Panc1 (cell line): ENCODE measurements at regions of chr2 and their contacts with region 1.

Region 1: GRCh38 chr2:100730346-100730745 is 89.6 kb upstream of the NPAS2 start:
- DNase-seq: no peak
- ATAC-seq: peak; percentile 92
- H3K4me3 ChIP-seq: no peak overlapping the region
- H3K27ac ChIP-seq: no peak overlapping the region
- H3K4me1 ChIP-seq: peaks cover 10% of the 10 kb centered on the region
- H3K27me3 ChIP-seq: no peaks in the 10 kb centered on the region
- CTCF ChIP-seq: peak; percentile 84

Region 2: GRCh38 chr2:99689145-99689742 is 1041.1 kb before region 1 on chr2:
- CTCF ChIA-PET with region 1: interaction called, 11 read pairs
- POLR2A ChIA-PET with region 1: no interaction called
- in situ Hi-C with region 1: no loop called
- intact Hi-C with region 1: no loop called
- DNase-seq: no peak
- ATAC-seq: no peak
- H3K4me3 ChIP-seq: no peak overlapping the region
- H3K27ac ChIP-seq: no peak overlapping the region
- H3K4me1 ChIP-seq: no peaks in the 10 kb centered on the region
- H3K27me3 ChIP-seq: no peaks in the 10 kb centered on the region
- CTCF ChIP-seq: no peak

Region 3: GRCh38 chr2:100562732-100563720 is 167.3 kb before region 1 on chr2 and contains the start of gene PDCL3:
- CTCF ChIA-PET with region 1: no interaction called
- POLR2A ChIA-PET with region 1: no interaction called
- in situ Hi-C with region 1: no loop called
- intact Hi-C with region 1: no loop called
- DNase-seq: peak; percentile 90
- ATAC-seq: peak; percentile 98
- H3K4me3 ChIP-seq: peak within 1 kb of the TSS; percentile 83 to 97
- H3K27ac ChIP-seq: peak within 1 kb of the TSS; percentile 97
- H3K4me1 ChIP-seq: peaks cover 8% of the 10 kb centered on the region
- H3K27me3 ChIP-seq: no peaks in the 10 kb centered on the region
- CTCF ChIP-seq: no peak
- total RNA-seq, gene PDCL3: 43.1 TPM

Region 4: GRCh38 chr2:100852999-100853908 is 122.9 kb after region 1 on chr2:
- CTCF ChIA-PET with region 1: no interaction called
- POLR2A ChIA-PET with region 1: no interaction called
- in situ Hi-C with region 1: no loop called
- intact Hi-C with region 1: no loop called
- DNase-seq: no peak
- ATAC-seq: no peak
- H3K4me3 ChIP-seq: no peak overlapping the region
- H3K27ac ChIP-seq: no peak overlapping the region
- H3K4me1 ChIP-seq: peaks cover 13% of the 10 kb centered on the region
- H3K27me3 ChIP-seq: no peaks in the 10 kb centered on the region
- CTCF ChIP-seq: no peak; the same call in 1 of the 2 replicates

Region 5: DNA sequence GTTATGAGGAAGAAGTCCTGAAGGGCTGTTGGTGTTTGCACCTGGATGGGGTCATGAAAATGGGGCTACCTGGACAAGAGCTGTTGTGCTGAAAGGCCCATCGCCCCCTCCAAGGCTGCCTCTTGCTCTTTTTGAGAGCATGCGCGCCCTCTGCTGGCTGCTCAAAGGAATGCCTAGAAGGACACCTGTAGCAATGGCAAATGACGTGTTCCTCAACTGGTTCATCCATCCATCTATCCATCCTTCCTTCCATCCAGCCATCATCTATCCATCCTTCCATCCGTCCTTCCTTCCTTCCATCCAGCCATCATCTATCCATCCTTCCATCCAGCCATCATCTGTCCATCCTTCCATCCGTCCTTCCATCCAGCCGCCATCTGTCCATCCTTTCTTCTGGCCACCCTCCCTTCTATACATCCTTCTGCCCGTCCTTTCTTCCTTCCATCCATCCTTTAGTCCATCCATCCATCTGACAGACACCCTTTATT is 254.6 kb after region 1 on chr2:
- CTCF ChIA-PET with region 1: no interaction called
- POLR2A ChIA-PET with region 1: interaction called, 3 read pairs
- in situ Hi-C with region 1: no loop called
- intact Hi-C with region 1: loop called (anchors 5 kb)
- DNase-seq: no peak
- ATAC-seq: peak; percentile 82
- H3K4me3 ChIP-seq: no peak overlapping the region
- H3K27ac ChIP-seq: no peak overlapping the region
- H3K4me1 ChIP-seq: peaks cover 11% of the 10 kb centered on the region
- H3K27me3 ChIP-seq: no peaks in the 10 kb centered on the region
- CTCF ChIP-seq: peak; percentile 93